ENCODE measurements at regions of chr14 and their contacts with region 1.

Region 1: DNA sequence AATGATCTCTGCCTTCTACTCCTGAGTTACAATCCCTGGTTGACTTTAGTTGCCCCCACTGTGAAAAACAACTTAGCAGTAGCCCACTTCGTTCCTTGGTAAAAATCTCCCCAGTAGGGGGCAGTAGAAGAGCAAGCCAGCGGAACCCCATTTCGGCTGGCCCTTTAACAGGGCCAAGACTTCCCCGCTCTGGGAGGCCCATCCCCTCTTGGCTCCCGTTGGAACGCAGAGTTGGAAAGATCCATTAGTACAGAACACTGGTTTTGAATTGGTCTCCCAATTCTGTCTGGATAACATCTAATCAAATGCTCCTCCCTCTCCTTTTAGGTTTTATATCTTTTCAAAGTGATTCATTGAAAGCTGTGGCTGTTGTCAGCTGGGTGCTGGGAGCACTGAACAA is 1133.3 kb downstream of the BCL11B start:
- DNase-seq: peak; percentile 93
- H3K4me3 Mint-ChIP-seq: peak overlapping the region; percentile 77
- H3K27ac Mint-ChIP-seq: peak overlapping the region; percentile 79
- H3K4me1 Mint-ChIP-seq: peaks cover 72% of the 10 kb centered on the region
- H3K27me3 Mint-ChIP-seq: no peaks in the 10 kb centered on the region

Region 2: GRCh38 chr14:97930166-97930565 is 208.5 kb before region 1 on chr14:
- intact Hi-C with region 1: no loop called
- DNase-seq: no peak
- H3K4me3 Mint-ChIP-seq: no peak overlapping the region
- H3K27ac Mint-ChIP-seq: no peak overlapping the region
- H3K4me1 Mint-ChIP-seq: peaks cover 3% of the 10 kb centered on the region
- H3K27me3 Mint-ChIP-seq: no peaks in the 10 kb centered on the region

Region 3: DNA sequence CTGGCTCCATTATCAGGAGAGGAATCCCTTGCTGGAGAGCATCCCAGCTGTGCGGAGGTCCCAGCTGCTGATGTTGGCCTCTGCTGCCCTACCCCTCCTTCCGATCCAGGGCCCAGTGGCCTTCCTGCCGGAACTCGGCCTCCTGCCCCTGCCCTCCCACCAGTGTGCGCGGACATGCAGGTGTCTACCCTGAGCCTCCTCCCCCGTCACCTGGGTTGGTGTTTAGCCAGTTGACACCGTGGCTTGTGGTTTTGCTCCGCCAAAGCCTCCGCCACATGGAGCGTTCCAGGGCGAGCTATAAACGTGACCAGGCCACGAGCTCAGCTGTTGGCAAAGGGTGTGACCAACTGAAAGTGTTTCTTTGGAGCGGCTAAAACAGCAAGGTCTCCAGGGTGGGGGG is 29.0 kb after region 1 on chr14:
- intact Hi-C with region 1: loop called (anchors 2 kb)
- DNase-seq: peak; percentile 79
- H3K4me3 Mint-ChIP-seq: peak overlapping the region; percentile 46
- H3K27ac Mint-ChIP-seq: peak overlapping the region; percentile 77
- H3K4me1 Mint-ChIP-seq: peaks cover 54% of the 10 kb centered on the region
- H3K27me3 Mint-ChIP-seq: no peaks in the 10 kb centered on the region

Region 4: DNA sequence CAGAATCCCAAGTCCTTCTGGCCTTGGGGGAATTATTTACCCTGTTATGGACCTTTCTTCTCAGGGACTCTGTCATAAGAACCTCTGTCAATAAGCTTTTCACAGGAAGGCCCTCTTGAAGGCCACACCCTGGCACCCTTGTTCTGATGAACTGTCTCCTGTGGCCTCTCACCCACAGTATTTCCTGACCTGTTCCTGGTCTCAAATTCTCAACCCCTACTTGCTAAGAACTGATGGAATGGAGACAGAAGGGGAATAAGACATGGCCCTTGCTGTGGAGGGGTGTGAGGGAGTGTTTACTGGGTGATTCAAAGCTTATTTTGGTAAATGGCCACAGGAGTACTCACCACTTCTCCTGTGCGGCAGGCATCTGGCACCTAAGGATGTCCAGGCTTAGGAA is 50.4 kb after region 1 on chr14:
- intact Hi-C with region 1: loop called (anchors 2 kb)
- DNase-seq: peak; percentile 86
- H3K4me3 Mint-ChIP-seq: peak overlapping the region; percentile 76
- H3K27ac Mint-ChIP-seq: peak overlapping the region; percentile 97
- H3K4me1 Mint-ChIP-seq: peaks cover 91% of the 10 kb centered on the region
- H3K27me3 Mint-ChIP-seq: no peaks in the 10 kb centered on the region

Region 5: GRCh38 chr14:98368216-98368615 is 229.6 kb after region 1 on chr14:
- intact Hi-C with region 1: no loop called
- DNase-seq: no peak
- H3K4me3 Mint-ChIP-seq: no peak overlapping the region
- H3K27ac Mint-ChIP-seq: no peak overlapping the region
- H3K4me1 Mint-ChIP-seq: no peaks in the 10 kb centered on the region
- H3K27me3 Mint-ChIP-seq: no peaks in the 10 kb centered on the region

Region 6: DNA sequence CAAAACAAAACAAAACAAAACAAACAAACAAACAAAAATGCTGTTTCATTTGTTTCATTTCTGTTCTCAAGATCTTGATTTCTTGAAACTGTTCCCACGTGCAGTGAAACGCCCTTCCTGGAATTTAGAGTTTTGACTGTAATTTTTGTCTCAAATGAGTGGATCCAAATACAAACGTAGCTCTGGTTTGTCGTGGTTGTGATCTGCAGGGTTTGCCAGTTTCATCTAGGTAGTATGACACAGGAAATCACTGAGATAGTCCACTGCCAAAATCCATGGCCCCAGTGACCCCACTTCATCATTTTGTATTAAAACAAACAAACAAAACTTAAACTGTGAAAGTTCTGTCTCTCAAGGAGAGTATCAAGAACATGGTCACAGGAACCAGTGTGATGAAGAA is 294.8 kb after region 1 on chr14:
- intact Hi-C with region 1: loop called (anchors 5 kb)
- DNase-seq: peak; percentile 61
- H3K4me3 Mint-ChIP-seq: peak overlapping the region; percentile 15
- H3K27ac Mint-ChIP-seq: peak overlapping the region; percentile 42
- H3K4me1 Mint-ChIP-seq: peaks cover 22% of the 10 kb centered on the region
- H3K27me3 Mint-ChIP-seq: no peaks in the 10 kb centered on the region

Region 7: DNA sequence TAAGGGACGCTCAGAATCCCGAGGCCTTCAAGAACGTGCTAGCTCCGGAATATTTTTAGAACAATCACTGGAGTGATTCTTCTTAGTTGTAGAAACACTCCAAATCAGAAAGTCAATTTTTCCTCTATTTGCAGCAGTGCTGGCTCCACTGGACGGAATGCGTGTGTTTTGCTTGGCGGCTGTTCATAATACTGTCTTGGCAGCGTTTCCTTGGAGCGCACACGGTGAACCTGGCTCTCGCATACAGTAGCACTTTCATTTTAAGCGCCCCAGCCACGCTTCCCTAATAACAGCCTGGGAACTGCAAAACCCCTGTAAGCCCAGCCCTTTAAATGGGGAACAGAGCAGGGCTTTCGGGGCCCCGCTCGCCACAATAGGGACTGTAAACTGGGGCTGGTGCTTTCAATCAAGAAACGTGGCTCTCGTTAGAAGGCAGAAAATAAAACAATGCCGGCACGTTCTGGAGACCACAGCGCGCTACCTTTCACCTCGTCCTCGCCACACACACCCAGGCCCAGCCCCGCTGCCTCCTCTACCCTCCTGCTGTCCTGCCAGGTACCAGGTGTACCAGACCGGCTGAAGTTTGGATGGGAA is 1053.5 kb after region 1 on chr14:
- intact Hi-C with region 1: loop called (anchors 2 kb)
- DNase-seq: peak; percentile 80
- H3K4me3 Mint-ChIP-seq: peak overlapping the region; percentile 90
- H3K27ac Mint-ChIP-seq: peak overlapping the region; percentile 89
- H3K4me1 Mint-ChIP-seq: peaks cover 89% of the 10 kb centered on the region
- H3K27me3 Mint-ChIP-seq: no peaks in the 10 kb centered on the region

Region 8: DNA sequence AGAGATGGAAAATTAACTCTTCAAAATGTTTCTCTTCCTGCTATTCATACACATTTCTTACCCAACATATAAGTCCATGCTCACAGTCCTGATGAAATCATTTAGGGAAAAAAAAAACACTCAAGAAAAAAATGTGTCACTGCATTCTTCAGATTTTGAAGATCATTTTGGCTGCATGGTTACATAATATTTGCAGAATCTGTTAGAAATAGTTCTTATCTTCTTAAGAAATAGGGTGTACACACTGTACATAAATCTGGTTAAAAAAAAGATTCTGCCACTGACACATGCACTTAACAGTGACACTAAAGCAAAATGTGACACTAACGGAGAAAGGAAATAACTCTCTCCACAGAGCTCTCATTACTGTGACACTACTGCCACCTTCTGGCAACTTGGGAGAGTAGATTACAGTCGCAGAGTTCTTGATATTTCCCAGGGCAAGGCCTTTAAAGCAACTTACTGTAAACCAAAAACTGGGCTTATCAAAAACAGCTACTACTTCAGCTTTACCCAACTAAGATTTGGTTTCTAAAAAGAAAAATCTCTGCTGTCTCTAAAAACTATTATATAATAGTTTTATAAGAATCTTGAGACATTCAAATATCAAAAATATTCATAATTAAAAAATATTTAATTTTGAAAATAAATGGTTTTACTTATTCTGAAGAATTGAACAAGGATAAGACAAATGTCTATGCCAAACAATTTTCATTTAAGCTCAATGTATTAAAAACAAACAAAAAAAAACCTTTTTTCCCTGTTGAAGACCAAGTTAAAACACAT is 1277.0 kb after region 1 on chr14:
- intact Hi-C with region 1: loop called (anchors 10 kb)
- DNase-seq: peak; percentile 91
- H3K4me3 Mint-ChIP-seq: no peak overlapping the region
- H3K27ac Mint-ChIP-seq: peak overlapping the region; percentile 13
- H3K4me1 Mint-ChIP-seq: peaks cover 20% of the 10 kb centered on the region
- H3K27me3 Mint-ChIP-seq: no peaks in the 10 kb centered on the region

Measured in activated CD4-positive, alpha-beta T cell treated with anti-CD3 and anti-CD28 coated beads, Interleukin-2, amount 10 ng/mL, durations not matched to agents 24 days and 14 days (primary cell).